PC-9 (cell line): ENCODE measurements at regions of chr20 and their contacts with region 1.

Region 1: DNA sequence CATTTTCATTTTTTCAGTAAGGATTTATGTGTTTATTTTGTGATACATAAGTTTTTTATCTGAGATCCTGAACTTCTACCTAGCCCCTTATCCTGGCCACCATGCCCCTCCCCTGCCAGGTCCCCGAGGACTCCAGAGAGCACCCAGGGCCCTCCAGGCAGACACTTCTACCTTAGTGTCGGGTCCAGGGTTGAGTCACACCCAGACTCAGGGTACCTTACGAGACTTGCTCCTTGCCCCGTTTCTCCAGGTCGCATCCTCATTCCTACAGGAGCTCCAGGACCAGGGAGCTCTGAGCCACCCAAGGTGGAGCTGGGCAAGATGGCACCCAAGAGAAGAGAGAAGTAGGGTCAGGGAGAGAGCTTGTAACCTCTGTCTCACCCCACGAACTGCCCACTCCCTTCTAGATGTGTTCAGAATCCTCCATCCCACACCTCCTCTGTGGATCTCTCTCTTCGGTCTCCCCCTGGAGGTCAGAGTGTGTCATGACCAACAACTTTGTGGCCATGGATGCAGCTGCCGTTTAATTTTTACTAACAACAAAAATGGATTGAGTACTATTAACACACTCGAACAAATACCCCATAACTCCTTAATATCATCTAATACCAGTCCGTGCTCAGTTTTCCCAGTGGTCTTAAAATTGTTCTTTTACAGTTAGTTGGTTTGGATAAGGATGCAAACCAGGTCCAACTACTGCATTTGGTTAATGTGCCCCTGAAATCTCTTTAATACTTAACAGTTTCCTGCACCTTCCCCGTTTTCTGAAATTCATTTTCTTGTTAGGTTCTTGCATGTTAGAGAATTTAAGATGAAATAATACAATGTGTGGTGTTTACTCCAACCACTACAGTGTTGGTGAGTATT is 130.6 kb upstream of the INSM1 start:
- DNase-seq: peak in 1 of 2 experiments; percentile 21
- H3K4me3 ChIP-seq: no peak overlapping the region
- H3K27ac ChIP-seq: no peak overlapping the region
- H3K4me1 ChIP-seq: no peaks in the 10 kb centered on the region
- H3K27me3 ChIP-seq: peaks cover 62% of the 10 kb centered on the region; the same call in 1 of the 2 replicates
- CTCF ChIP-seq: peak; percentile 74

Region 2: DNA sequence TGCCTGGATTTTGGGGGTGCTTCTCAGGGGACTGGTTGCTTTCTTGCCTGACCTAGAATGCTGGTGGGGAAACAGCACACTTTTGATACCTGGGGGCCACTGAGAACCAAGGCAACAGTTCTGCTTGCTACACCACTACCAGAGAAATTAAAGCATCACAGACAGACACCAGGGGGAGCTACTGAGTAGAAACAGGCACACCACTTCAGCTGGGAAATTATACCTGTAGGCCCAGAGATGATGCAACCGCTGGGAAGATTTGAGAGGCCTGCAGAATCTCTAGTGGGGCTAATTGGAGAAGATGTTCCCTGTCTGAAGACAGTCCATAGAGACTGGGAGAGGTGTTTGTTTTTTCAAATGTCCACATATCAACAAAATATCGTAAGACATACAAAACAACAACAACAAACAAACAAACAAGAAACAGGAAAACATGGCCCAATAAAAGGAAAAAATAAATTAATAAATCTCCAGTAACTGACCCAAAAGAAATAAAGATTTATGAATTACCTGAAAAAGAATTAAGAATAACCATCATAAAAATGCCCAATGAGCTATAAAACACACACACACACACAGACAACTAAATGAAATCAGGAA is 608.7 kb before region 1 on chr20:
- CTCF ChIA-PET with region 1: no interaction called
- POLR2A ChIA-PET with region 1: no interaction called
- intact Hi-C with region 1: loop called (anchors 5 kb)
- DNase-seq: peak; percentile 54 to 61
- H3K4me3 ChIP-seq: no peak overlapping the region
- H3K27ac ChIP-seq: no peak overlapping the region
- H3K4me1 ChIP-seq: no peaks in the 10 kb centered on the region
- H3K27me3 ChIP-seq: peaks cover 27% of the 10 kb centered on the region
- CTCF ChIP-seq: peak; percentile 82

Region 3: GRCh38 chr20:20435453-20435852 is 198.1 kb after region 1 on chr20:
- CTCF ChIA-PET with region 1: no interaction called
- POLR2A ChIA-PET with region 1: no interaction called
- intact Hi-C with region 1: no loop called
- DNase-seq: no peak
- H3K4me3 ChIP-seq: no peak overlapping the region
- H3K27ac ChIP-seq: no peak overlapping the region
- H3K4me1 ChIP-seq: no peaks in the 10 kb centered on the region
- H3K27me3 ChIP-seq: no peaks in the 10 kb centered on the region
- CTCF ChIP-seq: no peak